Endothelial cell of umbilical vein (primary cell): ENCODE measurements at regions of chr13 and their contacts with region 1.

Region 1: GRCh38 chr13:50208826-50209335 is 193.6 kb downstream of the KCNRG start:
- DNase-seq: peak; percentile 77
- H3K4me3 ChIP-seq: no peak overlapping the region
- H3K27ac ChIP-seq: no peak overlapping the region
- H3K4me1 ChIP-seq: peaks cover 10% of the 10 kb centered on the region
- H3K27me3 ChIP-seq: no peaks in the 10 kb centered on the region
- CTCF ChIP-seq: no peak
- POLR2A ChIP-seq: no peak

Region 2: DNA sequence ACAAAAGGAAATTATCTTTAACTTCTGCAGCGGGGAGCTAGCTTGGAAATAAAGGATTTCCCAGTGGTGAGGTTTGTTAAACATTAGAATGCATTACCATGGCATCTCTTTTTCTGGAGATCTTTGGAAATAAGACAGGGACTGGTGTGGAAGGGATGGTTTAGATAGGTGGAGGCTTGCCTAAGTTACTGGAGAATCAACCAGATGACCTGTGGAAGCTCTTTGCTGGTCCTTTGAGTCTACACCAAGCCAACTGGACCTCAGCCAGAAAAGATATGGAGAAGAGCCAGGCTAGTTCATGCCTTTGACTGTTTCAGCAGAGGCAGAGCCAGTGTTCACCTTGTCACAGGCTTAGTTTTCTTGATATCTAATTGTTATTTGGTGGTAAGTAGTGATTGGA is 58.9 kb before region 1 on chr13:
- CTCF ChIA-PET with region 1: no interaction called
- POLR2A ChIA-PET with region 1: no interaction called
- dilution Hi-C with region 1: no loop called
- intact Hi-C with region 1: loop called (anchors 10 kb)
- DNase-seq: peak; percentile 35
- H3K4me3 ChIP-seq: no peak overlapping the region
- H3K27ac ChIP-seq: no peak overlapping the region
- H3K4me1 ChIP-seq: peaks cover 2% of the 10 kb centered on the region
- H3K27me3 ChIP-seq: no peaks in the 10 kb centered on the region
- CTCF ChIP-seq: no peak
- POLR2A ChIP-seq: no peak

Region 3: GRCh38 chr13:50244713-50245574 is 36.1 kb after region 1 on chr13:
- CTCF ChIA-PET with region 1: interaction called, 3 read pairs
- POLR2A ChIA-PET with region 1: no interaction called
- dilution Hi-C with region 1: no loop called
- intact Hi-C with region 1: loop called (anchors 2 kb)
- DNase-seq: peak; percentile 90
- H3K4me3 ChIP-seq: no peak overlapping the region
- H3K27ac ChIP-seq: no peak overlapping the region
- H3K4me1 ChIP-seq: peaks cover 15% of the 10 kb centered on the region
- H3K27me3 ChIP-seq: no peaks in the 10 kb centered on the region
- CTCF ChIP-seq: no peak
- POLR2A ChIP-seq: no peak

Region 4: DNA sequence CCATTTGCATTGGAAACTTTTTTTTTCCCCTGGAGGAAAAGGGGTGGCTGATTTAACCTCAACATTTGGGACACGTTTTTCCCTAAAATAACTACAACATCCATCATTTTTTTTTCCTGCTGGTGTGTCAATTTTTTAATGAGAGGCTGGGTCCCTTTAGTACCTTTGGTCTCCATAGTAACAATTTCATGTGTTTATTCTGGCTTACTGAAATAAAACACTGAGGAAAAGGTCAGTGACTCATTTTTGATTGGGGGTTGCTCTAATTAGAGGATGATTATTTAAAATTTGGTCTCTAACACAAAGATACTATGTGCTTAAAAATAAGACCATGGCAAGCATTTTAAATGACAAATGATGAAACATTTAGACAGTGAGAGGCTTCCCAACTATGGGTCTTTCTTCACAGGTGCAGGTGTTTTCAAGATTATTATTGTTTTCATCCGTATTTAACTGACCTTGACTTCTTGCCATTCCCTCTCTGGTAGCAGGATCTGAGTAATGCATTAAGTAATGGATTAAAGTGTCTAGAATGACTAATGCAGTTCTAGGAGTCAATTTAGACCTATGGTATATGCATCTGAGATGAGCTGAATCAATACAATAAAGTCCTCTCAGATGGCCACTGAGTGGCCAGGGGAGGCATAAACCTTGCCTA is 212.7 kb after region 1 on chr13:
- CTCF ChIA-PET with region 1: no interaction called
- POLR2A ChIA-PET with region 1: no interaction called
- dilution Hi-C with region 1: no loop called
- intact Hi-C with region 1: loop called (anchors 5 kb)
- DNase-seq: peak; percentile 91
- H3K4me3 ChIP-seq: peak overlapping the region in 1 of 3 experiments; percentile 9
- H3K27ac ChIP-seq: peak overlapping the region; percentile 57
- H3K4me1 ChIP-seq: peaks cover 19% of the 10 kb centered on the region
- H3K27me3 ChIP-seq: no peaks in the 10 kb centered on the region
- CTCF ChIP-seq: no peak
- POLR2A ChIP-seq: no peak